IMR-90 (cell line): ENCODE measurements at regions of chr7 and their contacts with region 1.

Region 1: GRCh38 chr7:121180436-121181063 is 148.2 kb upstream of the WNT16 start:
- DNase-seq: no peak
- ATAC-seq: no peak
- H3K4me3 ChIP-seq: no peak overlapping the region
- H3K27ac ChIP-seq: no peak overlapping the region
- H3K4me1 ChIP-seq: peaks cover 3% of the 10 kb centered on the region; the same call in 1 of the 2 replicates
- H3K27me3 ChIP-seq: no peaks in the 10 kb centered on the region
- CTCF ChIP-seq: no peak
- POLR2A ChIP-seq: no peak
- RAD21 ChIP-seq: no peak

Region 2: GRCh38 chr7:121132940-121133339 is 47.6 kb before region 1 on chr7:
- CTCF ChIA-PET with region 1: no interaction called
- POLR2A ChIA-PET with region 1: no interaction called
- dilution Hi-C with region 1: no loop called
- in situ Hi-C with region 1: no loop called
- intact Hi-C with region 1: loop called (anchors 5 kb)
- DNase-seq: no peak
- ATAC-seq: no peak
- H3K4me3 ChIP-seq: no peak overlapping the region
- H3K27ac ChIP-seq: no peak overlapping the region
- H3K4me1 ChIP-seq: no peaks in the 10 kb centered on the region
- H3K27me3 ChIP-seq: no peaks in the 10 kb centered on the region
- CTCF ChIP-seq: no peak
- POLR2A ChIP-seq: no peak
- RAD21 ChIP-seq: no peak

Region 3: GRCh38 chr7:121235201-121235600 is 54.7 kb after region 1 on chr7:
- CTCF ChIA-PET with region 1: no interaction called
- POLR2A ChIA-PET with region 1: no interaction called
- dilution Hi-C with region 1: no loop called
- in situ Hi-C with region 1: no loop called
- intact Hi-C with region 1: no loop called
- DNase-seq: peak; percentile 12
- ATAC-seq: peak; percentile 61; the same call in 1 of the 2 replicates
- H3K4me3 ChIP-seq: no peak overlapping the region
- H3K27ac ChIP-seq: no peak overlapping the region
- H3K4me1 ChIP-seq: no peaks in the 10 kb centered on the region; the same call in 1 of the 2 replicates
- H3K27me3 ChIP-seq: no peaks in the 10 kb centered on the region
- CTCF ChIP-seq: no peak
- POLR2A ChIP-seq: no peak
- RAD21 ChIP-seq: no peak

Region 4: GRCh38 chr7:121273467-121274167 is 93.1 kb after region 1 on chr7:
- CTCF ChIA-PET with region 1: no interaction called
- POLR2A ChIA-PET with region 1: no interaction called
- dilution Hi-C with region 1: no loop called
- in situ Hi-C with region 1: no loop called
- intact Hi-C with region 1: loop called (anchors 5 kb)
- DNase-seq: peak; percentile 13
- ATAC-seq: peak; percentile 19
- H3K4me3 ChIP-seq: no peak overlapping the region
- H3K27ac ChIP-seq: no peak overlapping the region
- H3K4me1 ChIP-seq: peaks cover 3% of the 10 kb centered on the region
- H3K27me3 ChIP-seq: no peaks in the 10 kb centered on the region
- CTCF ChIP-seq: no peak
- POLR2A ChIP-seq: no peak
- RAD21 ChIP-seq: no peak

Region 5: GRCh38 chr7:121697731-121698316 is 517.3 kb after region 1 on chr7:
- CTCF ChIA-PET with region 1: no interaction called
- POLR2A ChIA-PET with region 1: no interaction called
- dilution Hi-C with region 1: no loop called
- in situ Hi-C with region 1: no loop called
- intact Hi-C with region 1: no loop called
- DNase-seq: no peak
- ATAC-seq: no peak
- H3K4me3 ChIP-seq: no peak overlapping the region
- H3K27ac ChIP-seq: no peak overlapping the region
- H3K4me1 ChIP-seq: no peaks in the 10 kb centered on the region
- H3K27me3 ChIP-seq: no peaks in the 10 kb centered on the region
- CTCF ChIP-seq: no peak
- POLR2A ChIP-seq: no peak
- RAD21 ChIP-seq: no peak

Region 6: GRCh38 chr7:122123746-122124145 is 943.2 kb after region 1 on chr7:
- CTCF ChIA-PET with region 1: no interaction called
- POLR2A ChIA-PET with region 1: no interaction called
- dilution Hi-C with region 1: no loop called
- in situ Hi-C with region 1: no loop called
- intact Hi-C with region 1: no loop called
- DNase-seq: peak; percentile 18
- ATAC-seq: no peak
- H3K4me3 ChIP-seq: no peak overlapping the region
- H3K27ac ChIP-seq: no peak overlapping the region
- H3K4me1 ChIP-seq: no peaks in the 10 kb centered on the region
- H3K27me3 ChIP-seq: no peaks in the 10 kb centered on the region
- CTCF ChIP-seq: no peak
- POLR2A ChIP-seq: no peak
- RAD21 ChIP-seq: no peak